AG04450 (cell line): ENCODE measurements at regions of chr10 and their contacts with region 1.

Region 1: GRCh38 chr10:32190890-32191491 is 134.8 kb upstream of the KIF5B start:
- DNase-seq: no peak
- H3K4me3 ChIP-seq: no peak overlapping the region
- H3K27ac ChIP-seq: no peak overlapping the region
- H3K27me3 ChIP-seq: no peaks in the 10 kb centered on the region
- CTCF ChIP-seq: peak; percentile 70

Region 2: DNA sequence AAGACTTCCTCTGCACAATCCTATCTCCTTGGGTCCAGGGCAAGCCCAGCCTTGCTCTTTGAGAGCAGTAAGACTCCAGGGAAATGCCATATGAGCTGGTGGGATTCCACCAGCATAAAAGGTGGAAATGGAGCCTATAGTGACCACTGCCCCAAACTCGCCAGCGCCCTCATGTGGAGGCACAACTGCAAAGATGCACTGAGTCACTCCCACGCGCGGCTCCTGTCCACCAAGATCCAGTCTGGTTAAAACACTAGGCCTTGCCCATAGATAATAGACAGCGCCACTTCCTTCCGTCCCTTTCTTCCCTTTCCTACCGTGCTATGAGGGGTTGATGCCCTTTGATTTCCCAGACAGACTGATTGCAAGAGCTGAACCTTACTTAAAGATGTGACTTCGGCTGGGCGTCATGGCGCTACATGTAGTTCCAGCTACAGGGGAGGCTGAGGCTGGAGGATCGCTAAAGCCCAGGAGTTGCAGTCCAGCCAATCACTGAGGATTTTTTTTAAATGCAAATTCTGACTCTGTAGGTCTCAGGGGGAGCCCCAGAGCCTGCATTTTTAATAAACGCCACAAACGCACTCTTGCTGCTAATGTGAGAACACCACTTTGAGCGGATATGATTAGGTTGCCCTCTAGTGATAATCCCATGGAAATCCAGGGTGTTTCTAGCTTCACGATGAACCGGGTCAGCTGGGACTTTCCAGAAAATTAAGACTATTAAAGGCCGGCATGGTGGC is 19.5 kb after region 1 on chr10:
- CTCF ChIA-PET with region 1: interaction called, 14 read pairs
- POLR2A ChIA-PET with region 1: no interaction called
- DNase-seq: no peak
- H3K4me3 ChIP-seq: no peak overlapping the region
- H3K27ac ChIP-seq: no peak overlapping the region
- H3K27me3 ChIP-seq: no peaks in the 10 kb centered on the region
- CTCF ChIP-seq: peak; percentile 60

Region 3: GRCh38 chr10:32367793-32368453 is 176.9 kb after region 1 on chr10:
- CTCF ChIA-PET with region 1: interaction called, 10 read pairs
- POLR2A ChIA-PET with region 1: no interaction called
- DNase-seq: peak; percentile 38
- H3K4me3 ChIP-seq: no peak overlapping the region
- H3K27ac ChIP-seq: no peak overlapping the region
- H3K27me3 ChIP-seq: no peaks in the 10 kb centered on the region
- CTCF ChIP-seq: peak; percentile 76

Region 4: DNA sequence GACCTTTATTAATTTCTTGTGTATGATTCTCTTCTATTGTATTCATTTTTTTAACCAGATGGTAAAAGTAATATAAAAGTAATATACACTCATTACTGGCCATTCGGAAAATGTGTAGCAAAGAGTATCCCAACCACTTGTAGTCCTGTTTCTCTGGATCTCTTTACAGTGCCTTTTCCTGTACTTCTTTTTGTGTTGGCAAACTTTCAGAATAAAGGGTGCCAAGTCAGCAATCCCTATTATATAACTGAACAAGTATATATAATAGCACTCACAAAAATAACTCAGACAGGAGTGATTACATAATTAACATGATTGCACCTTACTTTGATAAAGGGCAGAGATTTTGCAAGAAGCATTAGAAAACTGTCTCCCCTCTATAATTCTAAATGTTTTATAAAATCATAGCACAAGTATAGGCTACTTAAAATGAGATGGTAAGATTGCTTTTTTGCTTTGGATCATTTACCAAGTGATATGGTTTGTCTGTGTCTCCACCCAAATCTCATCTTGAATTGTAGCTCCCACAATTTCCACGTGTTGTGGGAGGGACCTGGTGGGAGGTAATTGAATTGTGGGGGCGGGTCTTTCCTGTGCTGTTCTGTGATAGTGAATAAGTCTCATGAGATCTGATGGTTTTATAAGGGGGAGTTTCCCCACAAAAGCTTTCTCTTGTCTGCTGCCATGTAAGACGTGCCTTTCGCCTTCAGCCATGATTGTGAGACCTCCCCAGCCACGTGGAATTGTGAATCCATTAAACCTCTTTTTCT is 197.5 kb after region 1 on chr10:
- CTCF ChIA-PET with region 1: interaction called, 3 read pairs
- POLR2A ChIA-PET with region 1: interaction called, 10 read pairs
- DNase-seq: no peak
- H3K4me3 ChIP-seq: no peak overlapping the region
- H3K27ac ChIP-seq: no peak overlapping the region
- H3K27me3 ChIP-seq: no peaks in the 10 kb centered on the region
- CTCF ChIP-seq: no peak